ENCODE measurements at regions of chr11 and their contacts with region 1.

Region 1: DNA sequence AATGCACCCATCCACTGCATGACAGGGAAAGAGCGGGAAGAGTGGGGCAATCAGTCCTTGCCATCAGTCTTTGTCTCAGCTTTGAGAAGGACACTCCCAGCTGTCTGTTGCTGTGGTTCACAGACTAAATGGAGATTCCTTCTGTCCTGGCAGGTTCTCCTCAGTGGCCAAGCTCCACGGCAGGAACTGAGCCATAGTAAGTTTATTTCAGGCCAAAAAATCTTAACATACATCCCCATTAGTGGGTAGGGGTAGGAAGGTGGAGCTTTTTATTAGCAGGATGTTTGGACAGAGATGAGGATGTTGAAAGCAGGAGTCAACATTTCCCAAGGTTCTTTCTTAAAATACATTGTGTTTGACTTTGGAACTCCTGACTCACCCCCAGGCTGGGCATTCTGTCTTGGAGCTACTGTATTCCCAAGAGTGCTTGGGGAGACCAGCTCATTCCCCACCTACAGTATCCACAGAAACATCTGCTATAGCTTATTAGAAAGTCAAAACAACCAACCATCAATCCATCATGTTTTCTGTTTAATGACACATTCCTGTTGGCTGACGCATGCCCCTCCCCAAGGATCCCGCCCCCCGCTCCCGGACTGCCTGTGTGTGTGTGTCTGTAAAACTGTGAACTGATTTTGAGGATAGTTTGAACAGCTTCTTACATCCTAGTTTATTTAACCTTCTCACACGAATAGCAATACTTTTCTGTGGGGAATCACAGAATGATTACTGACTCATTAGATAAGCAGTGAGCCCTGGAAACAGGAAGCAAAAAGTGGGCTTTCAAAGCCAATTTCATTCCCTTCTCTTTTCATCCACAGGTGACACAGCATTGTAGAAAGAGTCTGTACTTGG is 109.5 kb downstream of the CCDC81 start:
- DNase-seq: no peak

Region 2: GRCh38 chr11:86559311-86559945 is 75.3 kb after region 1 on chr11:
- intact Hi-C with region 1: loop called (anchors 5 kb)
- DNase-seq: no peak

Region 3: GRCh38 chr11:86608251-86608799 is 124.2 kb after region 1 on chr11:
- intact Hi-C with region 1: loop called (anchors 5 kb)
- DNase-seq: no peak

Region 4: GRCh38 chr11:86688398-86689179 is 204.4 kb after region 1 on chr11:
- intact Hi-C with region 1: no loop called
- DNase-seq: no peak

Region 5: DNA sequence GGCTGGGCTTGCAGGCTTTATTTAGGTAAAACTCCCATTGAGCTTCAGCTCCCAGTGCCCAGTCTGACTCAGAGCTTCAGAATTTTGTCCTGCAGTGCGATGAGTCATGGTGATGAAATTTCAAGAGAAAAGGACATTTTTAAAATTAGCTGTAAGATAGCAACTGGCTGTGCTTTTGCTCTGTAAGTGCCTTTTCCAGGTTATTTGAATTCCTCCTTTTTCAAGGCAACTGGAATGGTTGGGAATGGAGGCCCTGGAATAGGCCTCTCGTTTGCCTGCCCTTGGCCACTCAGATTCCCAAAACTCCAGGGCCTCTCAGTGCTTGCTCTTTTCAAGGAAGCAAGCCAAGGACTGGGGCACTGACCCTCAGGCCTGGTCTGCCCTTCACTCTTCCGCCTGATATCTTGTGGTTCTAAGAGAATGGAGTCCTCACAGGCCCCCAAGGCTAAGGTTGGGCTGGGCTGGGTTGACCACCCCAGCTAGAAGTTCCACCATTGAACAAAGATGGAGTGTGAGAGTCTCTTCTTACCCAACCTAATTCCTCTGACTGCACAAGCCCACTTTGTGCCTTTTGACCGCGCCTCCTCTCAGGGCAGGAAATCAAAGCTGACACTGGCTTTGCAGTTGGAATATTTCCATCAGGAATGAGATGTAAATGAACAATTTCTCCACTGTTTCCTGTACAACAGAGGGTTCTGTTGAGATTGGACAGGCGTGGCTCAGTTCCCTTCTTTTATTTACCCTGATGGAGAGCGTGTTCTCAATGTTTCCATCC is 256.7 kb after region 1 on chr11:
- intact Hi-C with region 1: loop called (anchors 5 kb)
- DNase-seq: no peak